Posterior vena cava (tissue), 2 donors: ENCODE measurements at regions of chr6 and their contacts with region 1.

Region 1: DNA sequence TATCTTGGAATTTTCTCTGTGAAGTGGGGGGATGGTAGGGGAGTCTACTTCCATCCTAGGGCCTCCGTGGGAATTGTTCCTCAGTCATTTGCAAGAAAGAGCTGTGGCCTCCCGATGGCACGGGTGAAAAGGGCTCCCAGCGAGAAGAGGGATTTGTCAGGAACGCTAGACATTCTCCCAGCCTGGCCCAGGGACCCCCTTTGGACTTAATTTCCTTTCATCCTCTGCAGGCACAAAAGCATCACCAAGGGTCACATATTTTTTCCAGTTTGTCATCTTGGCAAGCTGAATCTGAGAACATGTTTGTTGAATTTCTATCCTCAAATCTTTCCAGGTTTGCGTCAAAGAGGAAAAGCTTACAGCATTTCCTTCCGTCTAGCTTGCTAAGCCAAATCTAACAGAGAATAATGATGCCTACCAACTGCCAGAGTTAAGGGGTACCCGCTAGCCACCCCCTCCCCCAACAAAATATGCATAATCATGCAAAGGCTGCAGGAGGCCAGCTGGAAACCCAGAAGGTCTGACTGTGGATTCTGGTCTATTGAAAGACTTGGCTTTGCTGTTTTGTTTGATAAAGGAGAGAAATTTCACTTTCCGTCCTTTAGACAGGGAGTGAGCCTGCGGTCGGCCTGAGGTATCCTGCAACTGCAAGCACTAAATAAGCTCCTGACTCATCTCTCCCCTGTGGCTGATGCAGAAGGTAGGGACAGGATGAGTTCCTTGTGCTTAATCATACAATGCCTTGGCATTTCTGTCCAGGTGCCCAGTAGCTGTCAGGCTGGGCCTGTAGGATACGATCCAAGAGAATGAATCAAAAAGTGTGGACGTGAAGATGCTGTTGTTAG is 23.1 kb downstream of the PSMG4 start:
- DNase-seq: peak; percentile 80

Region 2: GRCh38 chr6:3456755-3457466 is 175.1 kb after region 1 on chr6 and contains the start of gene SLC22A23:
- intact Hi-C with region 1: loop called (anchors 10 kb)
- DNase-seq: no peak
- total RNA-seq, gene SLC22A23: 5.2 to 5.6 TPM

Region 3: DNA sequence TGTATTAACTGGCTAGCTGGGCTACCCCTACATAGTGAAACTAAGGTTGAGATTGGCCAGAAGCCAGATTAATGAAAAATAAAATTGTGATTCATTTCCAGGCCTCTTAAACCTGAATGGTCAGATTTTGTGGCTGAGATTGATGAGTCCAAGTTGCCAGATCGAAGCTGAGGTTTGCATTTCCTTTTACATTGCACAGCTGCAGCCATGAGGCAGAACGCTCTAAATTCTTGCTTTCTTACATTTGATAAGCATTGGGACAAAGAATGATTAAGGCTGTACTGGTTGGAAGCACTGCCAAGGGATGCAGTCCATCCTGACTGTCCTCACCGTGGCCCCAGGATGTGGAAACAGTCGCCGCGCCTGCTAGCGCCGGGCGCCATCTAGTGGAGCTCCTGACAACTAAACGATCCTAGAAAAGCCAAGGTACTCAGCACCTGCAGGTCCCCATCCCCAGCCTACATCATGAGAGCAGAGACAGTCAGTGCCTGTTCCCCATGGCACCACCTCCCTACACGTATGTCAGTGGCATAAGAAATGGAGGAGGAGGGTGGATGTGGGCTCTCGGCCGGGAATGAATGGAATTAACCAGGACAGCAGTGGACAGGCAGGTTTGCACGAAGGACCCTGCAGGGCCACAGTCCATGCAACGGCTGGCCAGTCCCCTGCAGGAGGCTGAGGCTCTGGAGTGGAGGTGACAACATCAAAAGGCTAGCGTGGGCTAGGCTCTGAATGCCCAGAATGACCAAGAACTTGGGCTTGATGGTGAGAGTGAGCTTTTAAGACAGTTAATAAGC is 450.7 kb after region 1 on chr6:
- intact Hi-C with region 1: loop called (anchors 2 to 5 kb)
- DNase-seq: peak; percentile 94

Region 4: DNA sequence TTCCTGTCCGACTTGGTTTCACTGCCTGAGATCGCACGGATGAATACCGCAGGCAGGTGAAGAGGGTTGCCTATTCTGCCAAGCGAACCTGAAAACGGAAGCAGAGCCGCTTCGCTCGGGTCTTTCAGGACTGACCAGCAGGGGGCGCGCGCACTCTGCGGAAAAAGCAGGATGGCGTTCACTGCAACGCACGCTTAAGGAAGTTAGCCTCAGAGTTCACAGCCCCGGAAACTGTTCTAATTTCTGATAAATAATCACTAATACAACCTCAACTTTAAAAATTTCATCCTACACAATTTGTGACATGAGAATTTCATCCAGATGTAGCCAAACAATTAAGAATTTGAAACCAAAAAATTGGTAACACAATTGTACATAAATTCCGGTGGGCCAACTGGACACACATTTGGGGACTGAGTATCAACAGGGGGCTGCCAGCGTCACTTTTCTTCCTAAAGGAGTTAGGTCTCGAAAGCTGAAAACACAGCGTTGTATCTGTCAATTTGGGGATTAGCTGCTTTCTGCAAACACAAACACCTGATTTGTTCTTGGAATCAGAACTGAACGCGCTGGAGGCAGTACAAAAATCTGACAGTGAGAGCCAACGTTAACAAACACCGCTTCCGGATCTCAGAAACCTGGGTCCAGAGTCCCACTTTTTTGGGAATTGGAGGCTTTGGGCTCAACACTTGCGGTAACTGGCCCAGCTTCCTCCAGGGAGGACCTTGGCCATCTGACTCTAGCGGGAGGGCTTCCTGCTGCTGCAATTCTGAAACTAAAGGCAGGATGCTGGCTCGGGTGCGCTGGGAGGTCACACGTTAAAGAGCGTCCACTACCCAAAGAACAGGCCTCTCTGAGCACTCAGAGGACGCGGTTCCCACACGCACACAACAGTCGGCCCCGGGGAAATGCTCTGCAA is 460.8 kb after region 1 on chr6:
- intact Hi-C with region 1: loop called in 1 of 2 experiments (anchors 5 kb)
- DNase-seq: peak; percentile 96

Region 5: GRCh38 chr6:3990692-3991501 is 709.0 kb after region 1 on chr6:
- intact Hi-C with region 1: loop called in 1 of 2 experiments (anchors 10 kb)
- DNase-seq: peak; percentile 94

Region 6: DNA sequence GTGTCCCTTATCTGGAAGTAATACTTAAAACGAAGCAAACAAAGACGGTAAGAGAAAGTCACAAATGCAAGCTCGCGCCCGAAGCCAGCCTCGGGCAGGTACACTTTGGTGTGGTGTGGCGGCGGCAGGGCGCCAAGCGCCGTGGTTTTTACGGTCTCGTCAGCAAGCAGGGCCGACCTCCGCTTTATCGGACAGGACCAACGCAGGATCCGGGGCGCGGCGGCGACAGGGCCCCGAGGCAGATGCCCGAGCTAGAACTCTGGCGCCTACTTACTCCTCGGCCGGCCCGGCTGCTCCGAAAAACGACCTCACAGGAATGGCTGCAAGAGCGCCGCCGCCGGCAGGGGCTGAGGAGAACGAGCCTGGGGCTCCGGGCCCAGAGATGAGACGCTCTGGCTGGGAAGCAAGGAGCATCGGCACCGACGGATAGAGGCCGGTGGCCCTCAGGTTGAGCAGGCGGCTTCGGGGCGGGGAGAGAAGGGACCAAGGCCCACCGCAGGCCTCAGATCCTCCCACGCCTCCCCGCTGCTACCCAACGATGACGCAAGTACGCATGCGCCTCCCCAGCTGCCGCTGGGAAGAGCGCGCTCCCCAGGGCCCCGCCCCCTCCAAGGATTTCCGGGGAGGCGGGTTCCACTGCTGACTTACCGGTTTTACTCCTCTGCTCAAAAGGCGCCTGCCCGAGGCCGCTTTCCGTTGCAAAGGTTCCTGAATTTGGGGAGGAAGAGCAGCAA is 736.5 kb after region 1 on chr6:
- intact Hi-C with region 1: loop called in 1 of 2 experiments (anchors 10 kb)
- DNase-seq: peak; percentile 98